Esophagus squamous epithelium (tissue), 5 donors: ENCODE measurements at regions of chr6 and their contacts with region 1.

Region 1: GRCh38 chr6:49606696-49607390 is 29.8 kb downstream of the RHAG start:
- DNase-seq: no peak
- H3K4me3 ChIP-seq: no peak overlapping the region
- H3K27ac ChIP-seq: no peak overlapping the region
- H3K4me1 ChIP-seq: no peaks in the 10 kb centered on the region
- H3K27me3 ChIP-seq: peaks cover 0 to 4% (median 0%) of the 10 kb centered on the region in 4 donors
- CTCF ChIP-seq: peak; percentile 40 to 93 (median 82)
- POLR2A ChIP-seq: no peak

Region 2: GRCh38 chr6:49366539-49366938 is 240.3 kb before region 1 on chr6:
- intact Hi-C with region 1: no loop called
- DNase-seq: no peak
- H3K4me3 ChIP-seq: no peak overlapping the region
- H3K27ac ChIP-seq: no peak overlapping the region
- H3K4me1 ChIP-seq: no peaks in the 10 kb centered on the region
- H3K27me3 ChIP-seq: no peaks in the 10 kb centered on the region
- CTCF ChIP-seq: no peak
- POLR2A ChIP-seq: no peak

Region 3: GRCh38 chr6:49531774-49532569 is 74.9 kb before region 1 on chr6:
- intact Hi-C with region 1: loop called (anchors 5 kb)
- DNase-seq: no peak
- H3K4me3 ChIP-seq: peak overlapping the region in 1 of 4 donors; percentile 17
- H3K27ac ChIP-seq: no peak overlapping the region
- H3K4me1 ChIP-seq: peaks cover 0 to 6% (median 3%) of the 10 kb centered on the region in 3 donors
- H3K27me3 ChIP-seq: peaks cover 0 to 8% (median 0%) of the 10 kb centered on the region in 4 donors
- CTCF ChIP-seq: peak; percentile 40 to 91 (median 80)
- POLR2A ChIP-seq: no peak